ENCODE measurements at regions of chr3 and their contacts with region 1.

Region 1: DNA sequence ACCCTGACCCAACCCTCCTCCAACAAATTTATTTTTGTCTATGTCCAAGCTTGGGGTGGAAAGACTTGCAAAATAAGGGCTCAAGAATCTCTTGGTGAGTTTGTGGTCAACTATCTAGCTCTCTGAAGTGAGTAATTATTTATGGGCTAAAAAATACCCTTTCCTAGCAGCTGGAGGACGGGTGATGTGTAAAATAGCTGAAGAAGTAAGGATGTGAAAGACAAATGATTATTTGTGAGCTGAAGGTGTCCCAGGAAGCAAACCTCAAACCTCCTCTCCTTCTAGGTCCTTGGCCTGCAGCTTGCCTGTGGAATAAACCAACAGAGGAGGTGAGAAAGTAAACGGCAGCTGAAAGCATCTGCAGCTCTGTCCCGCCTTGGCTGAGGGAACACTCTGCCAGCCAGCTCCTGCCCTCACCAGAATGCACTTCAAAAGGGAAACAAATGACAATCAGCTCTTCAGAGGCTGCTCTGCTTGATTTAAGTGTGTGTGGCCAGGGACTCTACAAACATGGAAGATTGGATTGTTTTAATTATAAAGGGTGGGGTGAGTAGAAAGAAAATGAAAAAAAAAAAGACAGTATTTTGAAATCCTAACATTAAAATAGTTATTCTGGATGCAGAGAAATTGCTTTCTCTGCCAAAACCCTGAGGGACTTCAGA is 60.3 kb downstream of the TM4SF4 start:
- DNase-seq: no peak

Region 2: DNA sequence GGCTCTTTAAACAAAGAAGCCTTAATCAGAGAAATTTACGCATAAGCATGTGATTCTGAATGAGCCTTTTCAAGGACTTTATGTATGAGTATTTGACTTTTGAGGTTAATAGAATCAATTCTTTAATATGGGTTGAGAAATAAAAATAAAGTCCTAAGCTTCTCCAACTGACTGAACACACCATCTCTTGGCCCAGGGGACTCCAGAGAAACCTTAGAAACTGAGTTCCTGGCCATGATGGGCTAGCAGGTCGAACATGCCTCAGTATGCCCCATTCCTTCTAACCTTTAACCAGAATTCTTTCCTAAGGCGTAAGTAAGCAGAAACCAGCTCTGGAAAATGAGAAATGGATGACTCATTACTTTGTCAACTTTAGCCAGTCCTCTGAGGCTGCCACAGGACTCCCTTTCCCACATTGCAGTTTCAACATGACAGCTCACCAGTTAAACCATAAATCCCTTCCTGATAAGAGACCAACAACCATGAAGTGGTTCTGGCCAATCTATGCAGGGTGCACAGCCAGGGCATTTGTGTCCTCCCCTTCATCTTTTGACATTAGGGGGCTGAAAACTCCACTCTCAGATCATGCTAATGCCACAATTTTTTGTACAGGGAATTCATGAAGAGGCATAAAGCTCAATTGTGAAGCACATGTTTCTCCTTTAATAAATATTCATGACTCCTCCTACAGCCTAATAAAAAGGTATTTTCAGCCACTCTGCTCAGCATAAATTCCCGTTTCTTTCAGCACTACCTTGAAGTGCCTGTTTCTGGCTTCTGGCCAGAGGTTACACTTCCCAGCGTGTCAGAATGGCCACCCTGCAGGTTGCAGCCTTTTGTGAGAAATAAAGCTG is 234.6 kb before region 1 on chr3:
- intact Hi-C with region 1: no loop called
- DNase-seq: no peak

Region 3: DNA sequence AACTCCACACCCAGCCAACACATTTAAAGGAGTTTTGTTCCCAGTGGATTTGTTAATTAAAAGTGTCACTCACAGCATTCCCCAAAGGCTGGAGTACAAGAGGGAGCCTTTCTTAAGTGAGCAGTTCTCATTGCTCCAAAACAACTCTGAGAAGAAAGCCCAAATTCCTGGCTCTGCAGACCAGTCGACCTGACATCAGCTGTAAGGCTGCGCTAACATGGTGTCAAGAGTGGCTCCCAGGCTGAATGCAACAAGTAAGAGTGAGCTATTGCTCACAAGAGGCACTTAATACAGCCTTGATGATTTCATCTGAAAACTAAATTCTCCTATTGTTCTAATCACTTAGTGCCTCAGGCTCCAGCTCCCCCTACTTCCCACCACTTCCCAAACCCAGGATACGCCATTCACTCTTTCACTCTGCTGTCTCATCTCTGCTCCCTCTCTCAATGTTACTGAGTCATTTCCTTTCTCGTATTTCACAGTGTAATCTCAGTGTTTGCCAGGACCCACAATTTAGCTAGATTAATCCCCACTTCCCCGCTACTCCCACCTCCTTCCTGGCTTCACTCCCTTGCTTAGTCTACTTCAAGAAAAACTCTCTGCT is 41.3 kb after region 1 on chr3:
- intact Hi-C with region 1: loop called (anchors 5 kb)
- DNase-seq: no peak

Region 4: GRCh38 chr3:149609595-149609994 is 74.8 kb after region 1 on chr3:
- intact Hi-C with region 1: no loop called
- DNase-seq: no peak

Region 5: GRCh38 chr3:149717391-149718056 is 182.7 kb after region 1 on chr3:
- intact Hi-C with region 1: loop called (anchors 2 kb)
- DNase-seq: no peak

Region 6: GRCh38 chr3:149908424-149908957 is 373.7 kb after region 1 on chr3:
- intact Hi-C with region 1: no loop called
- DNase-seq: no peak